T-cell (primary cell): ENCODE measurements at regions of chr19 and their contacts with region 1.

Region 1: GRCh38 chr19:6372594-6373095 is at the start of gene ALKBH7:
- DNase-seq: peak; percentile 86 to 100 (median 98)
- ATAC-seq: peak; percentile 83 to 85 (median 83)
- H3K4me3 ChIP-seq: peak within 1 kb of the TSS; percentile 74 to 76
- H3K4me3 Mint-ChIP-seq: peak within 1 kb of the TSS; percentile 86 to 93 (median 89)
- H3K27ac ChIP-seq: peak within 1 kb of the TSS; percentile 85
- H3K27ac Mint-ChIP-seq: peak within 1 kb of the TSS; percentile 93 to 94
- H3K4me1 ChIP-seq: peaks cover 6 to 16% of the 10 kb centered on the region in 2 experiments
- H3K4me1 Mint-ChIP-seq: peaks cover 14 to 23% (median 20%) of the 10 kb centered on the region in 3 donors
- H3K27me3 ChIP-seq: no peaks in the 10 kb centered on the region
- H3K27me3 Mint-ChIP-seq: no peaks in the 10 kb centered on the region
- total RNA-seq, gene ALKBH7: 49.9 to 94.8 (median 83.5) TPM

Region 2: GRCh38 chr19:5719961-5720790 is 652.5 kb before region 1 on chr19 and contains the starts of genes CATSPERD and LONP1:
- CTCF ChIA-PET with region 1: no interaction called
- POLR2A ChIA-PET with region 1: interaction called in 1 of 2 experiments, 11 read pairs
- DNase-seq: peak; percentile 96 to 100 (median 97)
- ATAC-seq: peak; percentile 90 to 92 (median 91)
- H3K4me3 ChIP-seq: peak within 1 kb of the TSS; percentile 84 to 91
- H3K4me3 Mint-ChIP-seq: peak within 1 kb of the TSS; percentile 87 to 89 (median 89)
- H3K27ac ChIP-seq: peak within 1 kb of the TSS; percentile 86
- H3K27ac Mint-ChIP-seq: peak within 1 kb of the TSS; percentile 95 to 98
- H3K4me1 ChIP-seq: peaks cover 10 to 35% of the 10 kb centered on the region in 2 experiments
- H3K4me1 Mint-ChIP-seq: peaks cover 24 to 33% (median 29%) of the 10 kb centered on the region in 3 donors
- H3K27me3 ChIP-seq: peaks cover 0 to under 1% of the 10 kb centered on the region in 2 experiments
- H3K27me3 Mint-ChIP-seq: peaks cover 0 to 3% of the 10 kb centered on the region in 2 donors
- total RNA-seq, gene CATSPERD: not detected
- total RNA-seq, gene LONP1: 70.0 to 83.9 (median 81.8) TPM

Region 3: GRCh38 chr19:6161271-6161850 is 211.3 kb before region 1 on chr19:
- CTCF ChIA-PET with region 1: no interaction called
- POLR2A ChIA-PET with region 1: no interaction called
- DNase-seq: peak in 33 of 35 experiments; percentile 11 to 88 (median 64)
- ATAC-seq: peak; percentile 71 to 88 (median 87)
- H3K4me3 ChIP-seq: no peak overlapping the region
- H3K4me3 Mint-ChIP-seq: peak overlapping the region in 1 of 3 donors; percentile 53
- H3K27ac ChIP-seq: no peak overlapping the region
- H3K27ac Mint-ChIP-seq: no peak overlapping the region
- H3K4me1 ChIP-seq: peaks cover 0 to 12% of the 10 kb centered on the region in 2 experiments
- H3K4me1 Mint-ChIP-seq: peaks cover 7 to 14% (median 10%) of the 10 kb centered on the region in 3 donors
- H3K27me3 ChIP-seq: peaks cover 0 to 2% of the 10 kb centered on the region in 2 experiments
- H3K27me3 Mint-ChIP-seq: peaks cover 0 to 3% of the 10 kb centered on the region in 2 donors

Region 4: GRCh38 chr19:6362027-6362350 is 10.7 kb before region 1 on chr19:
- CTCF ChIA-PET with region 1: interaction called in 1 of 2 experiments, 19 read pairs
- POLR2A ChIA-PET with region 1: interaction called, 4 to 16 read pairs
- DNase-seq: no peak
- ATAC-seq: peak in 3 of 4 experiments; percentile 1 to 7 (median 2)
- H3K4me3 ChIP-seq: peak overlapping the region; percentile 57 to 81
- H3K4me3 Mint-ChIP-seq: peak overlapping the region; percentile 86 to 100 (median 94)
- H3K27ac ChIP-seq: peak overlapping the region; percentile 88
- H3K27ac Mint-ChIP-seq: peak overlapping the region; percentile 93 to 96
- H3K4me1 ChIP-seq: peaks cover 7 to 41% of the 10 kb centered on the region in 2 experiments
- H3K4me1 Mint-ChIP-seq: peaks cover 12 to 30% (median 23%) of the 10 kb centered on the region in 3 donors
- H3K27me3 ChIP-seq: no peaks in the 10 kb centered on the region
- H3K27me3 Mint-ChIP-seq: no peaks in the 10 kb centered on the region